ENCODE measurements at regions of chr10 and their contacts with region 1.

Region 1: GRCh38 chr10:104308439-104308903 is 29.8 kb downstream of the ITPRIP start:
- DNase-seq: peak; percentile 58
- H3K4me3 Mint-ChIP-seq: peak overlapping the region; percentile 17
- H3K27ac Mint-ChIP-seq: peak overlapping the region; percentile 89
- H3K4me1 Mint-ChIP-seq: peaks cover 60% of the 10 kb centered on the region
- H3K27me3 Mint-ChIP-seq: peaks cover 3% of the 10 kb centered on the region

Region 2: DNA sequence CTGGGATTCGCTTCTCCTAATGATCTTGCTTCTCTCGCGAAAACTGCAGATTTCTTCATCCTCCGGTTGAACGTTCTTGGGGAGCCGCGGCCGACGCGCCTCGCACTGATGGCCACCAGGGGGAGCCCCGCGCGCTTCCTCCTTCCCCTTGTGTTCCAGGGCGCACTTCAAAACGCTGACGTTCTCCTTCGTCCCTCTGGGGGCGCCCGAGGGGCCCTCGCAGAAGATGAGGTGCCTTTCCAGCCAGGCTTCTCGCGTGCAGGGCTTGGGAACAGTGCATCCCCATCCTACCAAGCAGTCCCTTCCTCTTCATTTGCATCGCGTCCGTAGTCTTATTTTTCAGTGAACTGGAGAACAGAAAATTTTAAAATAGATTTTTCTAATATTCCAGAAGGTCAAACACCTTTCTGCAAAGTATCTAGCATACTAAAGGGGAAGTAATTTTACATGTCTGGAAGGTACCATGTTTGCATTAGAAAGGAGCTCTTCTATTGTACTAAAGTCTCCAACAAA is 17.0 kb before region 1 on chr10:
- CTCF ChIA-PET with region 1: interaction called, 201 read pairs
- intact Hi-C with region 1: loop called (anchors 1 kb)
- DNase-seq: peak; percentile 93
- H3K4me3 Mint-ChIP-seq: peak overlapping the region; percentile 10
- H3K27ac Mint-ChIP-seq: no peak overlapping the region
- H3K4me1 Mint-ChIP-seq: peaks cover 19% of the 10 kb centered on the region
- H3K27me3 Mint-ChIP-seq: peaks cover 3% of the 10 kb centered on the region

Region 3: DNA sequence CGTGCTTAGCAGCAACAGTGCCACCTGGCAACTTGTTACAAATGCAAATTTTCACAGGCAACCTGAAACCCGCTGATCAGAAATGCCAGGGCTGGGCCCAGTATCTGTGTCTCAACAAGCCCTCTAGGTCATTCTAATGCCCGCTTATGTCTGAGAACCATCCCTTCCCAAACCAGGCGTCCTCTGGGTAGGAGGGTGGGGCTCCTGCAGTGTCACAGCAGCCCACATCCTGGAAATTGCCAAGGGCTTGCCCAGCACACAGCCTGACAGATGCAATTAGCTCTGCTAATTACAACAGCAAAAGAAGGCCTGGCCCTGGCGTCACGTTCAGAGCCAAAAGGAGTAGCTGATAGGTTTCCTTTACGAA is 13.9 kb after region 1 on chr10:
- CTCF ChIA-PET with region 1: interaction called, 63 read pairs
- intact Hi-C with region 1: loop called (anchors 1 kb)
- DNase-seq: peak; percentile 79
- H3K4me3 Mint-ChIP-seq: peak overlapping the region; percentile 20
- H3K27ac Mint-ChIP-seq: peak overlapping the region; percentile 81
- H3K4me1 Mint-ChIP-seq: peaks cover 94% of the 10 kb centered on the region
- H3K27me3 Mint-ChIP-seq: no peaks in the 10 kb centered on the region

Region 4: DNA sequence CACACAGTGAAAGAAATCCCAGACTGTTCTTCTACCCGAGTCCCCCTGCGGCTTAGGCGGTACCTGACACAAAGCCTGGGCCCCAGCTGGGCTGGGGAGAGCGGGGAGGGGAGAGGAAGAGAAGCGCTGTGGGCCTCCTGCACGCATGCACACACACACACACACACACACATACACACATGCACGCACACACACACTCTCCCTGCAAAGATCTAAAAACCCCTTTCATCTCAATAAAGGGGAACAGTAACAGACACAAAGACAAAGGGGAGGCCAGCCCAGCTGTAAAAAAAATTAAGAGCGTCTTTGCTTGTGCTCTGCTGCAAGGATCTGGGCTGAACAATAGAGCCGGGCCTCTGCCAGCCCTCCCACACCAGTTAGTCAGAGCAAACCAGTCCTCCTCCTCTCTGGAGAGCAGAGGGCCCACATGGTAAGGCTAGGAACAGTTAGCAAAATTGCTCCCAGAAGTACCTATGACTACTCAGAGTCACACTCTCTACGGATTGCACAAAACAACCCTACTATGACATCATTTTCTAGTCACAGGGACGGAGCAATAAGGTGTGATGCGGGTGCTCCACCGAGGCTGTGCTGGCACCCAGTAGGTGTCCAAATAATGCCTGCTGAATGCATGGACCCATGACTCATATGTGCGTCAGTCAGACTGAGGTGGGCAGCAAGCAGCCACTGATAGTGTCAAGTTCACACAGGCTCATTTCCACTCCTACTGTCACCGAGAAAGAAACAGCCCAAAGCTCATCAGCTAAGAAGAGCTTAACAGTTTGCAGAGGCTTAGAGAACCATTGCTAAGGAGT is 20.6 kb after region 1 on chr10:
- CTCF ChIA-PET with region 1: interaction called, 67 read pairs
- intact Hi-C with region 1: loop called (anchors 1 kb)
- DNase-seq: peak; percentile 94
- H3K4me3 Mint-ChIP-seq: peak overlapping the region; percentile 72
- H3K27ac Mint-ChIP-seq: peak overlapping the region; percentile 96
- H3K4me1 Mint-ChIP-seq: peaks cover 98% of the 10 kb centered on the region
- H3K27me3 Mint-ChIP-seq: no peaks in the 10 kb centered on the region

Region 5: GRCh38 chr10:104387130-104387888 is 78.8 kb after region 1 on chr10:
- CTCF ChIA-PET with region 1: no interaction called
- intact Hi-C with region 1: no loop called
- DNase-seq: no peak
- H3K4me3 Mint-ChIP-seq: no peak overlapping the region
- H3K27ac Mint-ChIP-seq: no peak overlapping the region
- H3K4me1 Mint-ChIP-seq: peaks cover 6% of the 10 kb centered on the region
- H3K27me3 Mint-ChIP-seq: peaks cover 22% of the 10 kb centered on the region

Region 6: GRCh38 chr10:104540181-104540580 is 231.7 kb after region 1 on chr10:
- CTCF ChIA-PET with region 1: no interaction called
- intact Hi-C with region 1: no loop called
- DNase-seq: no peak
- H3K4me3 Mint-ChIP-seq: no peak overlapping the region
- H3K27ac Mint-ChIP-seq: no peak overlapping the region
- H3K4me1 Mint-ChIP-seq: no peaks in the 10 kb centered on the region
- H3K27me3 Mint-ChIP-seq: peaks cover 22% of the 10 kb centered on the region

Measured in activated naive CD4-positive, alpha-beta T cell treated with anti-CD3 and anti-CD28 coated beads for 36 hours (primary cell).